Activated naive CD8-positive, alpha-beta T cell treated with anti-CD3 and anti-CD28 coated beads, Interleukin-2, amount 10 ng/mL, durations not matched to agents 7 days and 5 days (primary cell): ENCODE measurements at regions of chr11 and their contacts with region 1.

Region 1: GRCh38 chr11:2961080-2961479 is 31.0 kb downstream of the NAP1L4 start:
- DNase-seq: no peak
- ATAC-seq: no peak
- H3K4me3 Mint-ChIP-seq: no peak overlapping the region
- H3K27ac Mint-ChIP-seq: peak overlapping the region; percentile 51
- H3K4me1 Mint-ChIP-seq: peaks cover 33% of the 10 kb centered on the region
- H3K27me3 Mint-ChIP-seq: no peaks in the 10 kb centered on the region

Region 2: DNA sequence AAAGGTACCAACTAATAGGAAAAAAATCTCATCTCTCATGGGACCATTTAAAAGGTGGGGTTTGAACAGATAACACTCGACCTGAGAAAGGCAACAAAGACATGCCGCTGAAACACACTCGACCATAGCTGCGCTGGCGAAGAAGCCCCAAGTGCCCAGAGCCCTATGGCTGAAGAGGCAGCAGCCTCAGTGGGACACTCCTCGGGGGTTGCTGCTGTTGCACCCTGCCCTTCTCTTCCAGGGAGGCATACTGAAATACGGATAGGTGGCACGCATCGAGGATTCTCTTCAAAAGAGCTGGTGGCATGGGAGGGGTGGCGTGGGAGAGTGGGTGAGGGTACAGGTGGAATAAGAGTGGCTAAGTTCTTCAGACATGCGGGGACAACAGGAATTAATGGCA is 13.3 kb before region 1 on chr11:
- POLR2A ChIA-PET with region 1: interaction called, 10 read pairs
- DNase-seq: no peak
- ATAC-seq: no peak
- H3K4me3 Mint-ChIP-seq: no peak overlapping the region
- H3K27ac Mint-ChIP-seq: peak overlapping the region; percentile 30
- H3K4me1 Mint-ChIP-seq: peaks cover 61% of the 10 kb centered on the region
- H3K27me3 Mint-ChIP-seq: no peaks in the 10 kb centered on the region

Region 3: GRCh38 chr11:3006505-3007183 is 45.6 kb after region 1 on chr11:
- POLR2A ChIA-PET with region 1: no interaction called
- DNase-seq: peak; percentile 80
- ATAC-seq: peak; percentile 97
- H3K4me3 Mint-ChIP-seq: peak overlapping the region; percentile 85
- H3K27ac Mint-ChIP-seq: peak overlapping the region; percentile 86
- H3K4me1 Mint-ChIP-seq: peaks cover 44% of the 10 kb centered on the region
- H3K27me3 Mint-ChIP-seq: no peaks in the 10 kb centered on the region

Region 4: GRCh38 chr11:3057069-3057963 is 96.2 kb after region 1 on chr11 and contains the start of gene CARS1:
- POLR2A ChIA-PET with region 1: no interaction called
- DNase-seq: peak; percentile 95
- ATAC-seq: peak; percentile 94
- H3K4me3 Mint-ChIP-seq: peak within 1 kb of the TSS; percentile 87
- H3K27ac Mint-ChIP-seq: peak within 1 kb of the TSS; percentile 88
- H3K4me1 Mint-ChIP-seq: peaks cover 32% of the 10 kb centered on the region
- H3K27me3 Mint-ChIP-seq: peaks cover 7% of the 10 kb centered on the region
- total RNA-seq, gene CARS1: 100 to 111 TPM